ENCODE measurements at regions of chr20 and their contacts with region 1.

Region 1: GRCh38 chr20:40990542-40991120 is 38.0 kb upstream of the TOP1 start:
- DNase-seq: peak; percentile 85
- ATAC-seq: peak; percentile 90
- H3K4me3 Mint-ChIP-seq: peak overlapping the region; percentile 15
- H3K27ac Mint-ChIP-seq: peak overlapping the region; percentile 85
- H3K4me1 Mint-ChIP-seq: peaks cover 55% of the 10 kb centered on the region
- H3K27me3 Mint-ChIP-seq: no peaks in the 10 kb centered on the region

Region 2: GRCh38 chr20:40860487-40860902 is 130.1 kb before region 1 on chr20:
- CTCF ChIA-PET with region 1: no interaction called
- POLR2A ChIA-PET with region 1: no interaction called
- DNase-seq: no peak
- ATAC-seq: no peak
- H3K4me3 Mint-ChIP-seq: no peak overlapping the region
- H3K27ac Mint-ChIP-seq: no peak overlapping the region
- H3K4me1 Mint-ChIP-seq: no peaks in the 10 kb centered on the region
- H3K27me3 Mint-ChIP-seq: peaks cover 2% of the 10 kb centered on the region

Region 3: DNA sequence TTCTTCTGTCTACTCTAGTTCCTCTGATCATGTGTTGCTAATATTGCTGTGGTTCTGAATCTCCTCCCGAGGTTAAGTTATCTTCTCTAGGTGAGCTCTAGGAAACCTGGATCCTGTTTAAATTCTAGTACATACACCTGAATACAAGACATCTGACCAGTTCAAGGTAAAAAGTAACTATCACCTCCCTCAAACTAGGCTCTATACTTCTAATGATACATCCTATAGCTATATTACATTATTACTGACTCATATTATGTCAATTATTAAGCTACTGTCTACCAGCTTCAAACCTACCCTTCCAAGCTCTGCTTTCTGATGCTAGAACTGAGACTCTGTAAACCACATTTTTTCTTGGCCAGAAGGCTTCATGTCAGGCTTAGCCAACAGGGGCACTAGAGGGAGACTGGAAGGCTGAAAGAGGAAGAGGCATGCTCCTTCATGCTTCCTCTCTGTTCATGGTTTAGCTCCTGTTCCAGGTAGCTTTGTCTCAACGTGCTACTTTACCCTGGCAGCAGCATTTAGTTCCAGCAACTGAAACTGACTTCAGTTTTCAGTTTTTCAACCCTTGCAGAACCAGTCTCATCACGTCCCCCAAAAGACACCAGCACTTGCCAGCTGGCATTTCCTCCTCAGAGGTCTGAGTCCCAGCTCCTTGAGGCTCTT is 110.4 kb before region 1 on chr20:
- CTCF ChIA-PET with region 1: no interaction called
- POLR2A ChIA-PET with region 1: no interaction called
- DNase-seq: no peak
- ATAC-seq: no peak
- H3K4me3 Mint-ChIP-seq: no peak overlapping the region
- H3K27ac Mint-ChIP-seq: peak overlapping the region; percentile 45
- H3K4me1 Mint-ChIP-seq: peaks cover 44% of the 10 kb centered on the region
- H3K27me3 Mint-ChIP-seq: peaks cover 3% of the 10 kb centered on the region

Region 4: DNA sequence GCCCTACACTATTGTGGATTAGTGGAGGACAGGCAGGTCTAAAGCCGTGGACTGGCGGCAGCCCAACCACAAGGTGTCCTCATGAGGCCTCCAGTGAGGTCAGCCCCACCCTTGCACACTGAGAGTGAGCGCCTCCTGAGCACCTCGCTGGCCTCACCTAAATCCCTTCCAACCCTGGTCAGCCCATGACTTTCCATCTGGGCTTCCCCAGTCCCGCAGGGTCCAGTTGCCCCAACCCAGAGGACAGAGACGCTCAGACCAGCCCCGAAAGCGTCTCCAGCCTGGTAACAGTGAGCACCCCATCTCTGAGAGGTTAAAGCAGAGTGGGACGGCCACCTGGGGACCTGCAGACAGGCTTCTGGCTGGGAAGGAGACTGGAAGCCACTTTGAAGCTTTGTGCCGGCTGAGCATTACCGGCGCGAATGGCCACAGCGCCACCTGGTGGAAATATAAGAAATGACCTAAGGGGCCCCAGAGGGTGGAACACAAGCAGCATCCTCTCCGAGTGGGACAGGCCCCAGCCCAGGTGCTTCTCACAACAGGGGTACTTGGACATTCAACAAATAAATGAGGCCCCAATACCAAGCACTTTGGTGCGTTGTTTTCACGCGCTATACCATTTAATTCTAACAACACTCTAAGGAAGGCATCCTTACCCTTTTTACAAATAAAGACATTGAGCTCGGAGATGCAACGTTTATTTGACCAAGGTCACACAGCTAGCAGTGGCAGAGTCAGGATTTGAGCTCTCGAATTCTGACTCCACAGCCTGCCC is 27.7 kb before region 1 on chr20:
- CTCF ChIA-PET with region 1: interaction called, 64 read pairs
- POLR2A ChIA-PET with region 1: interaction called, 3 read pairs
- DNase-seq: peak; percentile 86
- ATAC-seq: peak; percentile 91
- H3K4me3 Mint-ChIP-seq: no peak overlapping the region
- H3K27ac Mint-ChIP-seq: no peak overlapping the region
- H3K4me1 Mint-ChIP-seq: peaks cover 21% of the 10 kb centered on the region
- H3K27me3 Mint-ChIP-seq: peaks cover 9% of the 10 kb centered on the region

Region 5: DNA sequence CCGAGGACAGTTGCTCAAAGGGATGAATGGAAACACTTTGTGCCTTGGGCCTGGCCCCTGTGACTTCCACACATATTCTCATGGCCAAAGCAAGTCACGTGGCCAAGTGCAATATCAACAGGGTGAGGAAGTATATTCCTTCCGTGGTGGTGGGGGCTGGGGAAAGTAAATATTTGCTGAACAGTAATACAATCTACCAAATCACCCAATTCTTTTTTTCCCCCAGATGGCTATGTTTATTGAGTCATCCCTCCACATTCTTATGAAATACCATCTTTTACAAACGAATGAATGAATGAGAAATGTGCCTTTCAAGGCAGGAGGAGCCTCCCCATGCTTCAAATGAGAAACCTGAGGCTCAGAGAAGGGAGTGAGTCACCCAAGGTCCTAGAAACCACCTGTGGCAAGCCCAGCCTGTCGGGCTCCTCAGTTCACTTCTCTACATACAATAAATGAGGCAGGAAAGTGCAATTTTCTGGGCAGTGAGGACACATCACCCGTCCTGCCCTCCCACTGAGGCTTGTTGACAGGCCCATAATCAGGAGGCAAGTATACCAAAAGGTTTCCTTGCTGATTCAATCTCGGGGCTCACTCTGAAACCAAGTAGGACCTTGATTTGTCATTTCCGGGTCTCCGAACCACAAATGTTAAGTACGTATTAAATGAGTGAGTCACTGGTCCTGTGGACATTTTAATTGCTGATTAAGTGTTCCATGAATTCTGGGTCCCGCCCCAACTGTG is 12.7 kb after region 1 on chr20:
- CTCF ChIA-PET with region 1: interaction called, 37 read pairs
- POLR2A ChIA-PET with region 1: interaction called, 10 read pairs
- DNase-seq: peak; percentile 74
- ATAC-seq: peak; percentile 91
- H3K4me3 Mint-ChIP-seq: peak overlapping the region; percentile 26
- H3K27ac Mint-ChIP-seq: peak overlapping the region; percentile 96
- H3K4me1 Mint-ChIP-seq: peaks cover 51% of the 10 kb centered on the region
- H3K27me3 Mint-ChIP-seq: peaks cover 5% of the 10 kb centered on the region

Region 6: DNA sequence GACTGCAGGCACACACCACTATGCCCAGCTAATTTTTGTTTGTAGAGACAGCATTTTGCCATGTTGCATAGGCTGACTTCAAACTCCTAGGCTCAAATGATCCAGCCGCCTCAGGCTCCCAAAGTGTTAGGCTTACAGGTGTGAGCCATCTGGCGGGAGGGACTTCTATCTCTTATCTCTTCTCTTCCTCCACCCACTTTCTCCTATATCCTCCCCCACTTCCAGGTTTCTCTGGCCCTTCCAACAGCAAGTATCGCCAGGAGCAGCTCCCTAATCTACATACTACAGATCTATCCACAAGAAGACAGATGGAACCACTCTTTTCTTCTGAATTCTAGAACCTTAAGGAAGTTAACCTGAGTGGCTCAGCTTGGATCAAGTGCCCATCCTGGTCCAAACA is 32.9 kb after region 1 on chr20:
- CTCF ChIA-PET with region 1: interaction called, 22 read pairs
- POLR2A ChIA-PET with region 1: interaction called, 3 read pairs
- DNase-seq: no peak
- ATAC-seq: no peak
- H3K4me3 Mint-ChIP-seq: no peak overlapping the region
- H3K27ac Mint-ChIP-seq: no peak overlapping the region
- H3K4me1 Mint-ChIP-seq: peaks cover 19% of the 10 kb centered on the region
- H3K27me3 Mint-ChIP-seq: peaks cover 9% of the 10 kb centered on the region

Region 7: GRCh38 chr20:41047975-41048305 is 57.3 kb after region 1 on chr20:
- CTCF ChIA-PET with region 1: interaction called, 141 read pairs
- POLR2A ChIA-PET with region 1: no interaction called
- DNase-seq: no peak
- ATAC-seq: peak; percentile 55
- H3K4me3 Mint-ChIP-seq: peak overlapping the region; percentile 77
- H3K27ac Mint-ChIP-seq: peak overlapping the region; percentile 89
- H3K4me1 Mint-ChIP-seq: peaks cover 87% of the 10 kb centered on the region
- H3K27me3 Mint-ChIP-seq: no peaks in the 10 kb centered on the region

Region 8: DNA sequence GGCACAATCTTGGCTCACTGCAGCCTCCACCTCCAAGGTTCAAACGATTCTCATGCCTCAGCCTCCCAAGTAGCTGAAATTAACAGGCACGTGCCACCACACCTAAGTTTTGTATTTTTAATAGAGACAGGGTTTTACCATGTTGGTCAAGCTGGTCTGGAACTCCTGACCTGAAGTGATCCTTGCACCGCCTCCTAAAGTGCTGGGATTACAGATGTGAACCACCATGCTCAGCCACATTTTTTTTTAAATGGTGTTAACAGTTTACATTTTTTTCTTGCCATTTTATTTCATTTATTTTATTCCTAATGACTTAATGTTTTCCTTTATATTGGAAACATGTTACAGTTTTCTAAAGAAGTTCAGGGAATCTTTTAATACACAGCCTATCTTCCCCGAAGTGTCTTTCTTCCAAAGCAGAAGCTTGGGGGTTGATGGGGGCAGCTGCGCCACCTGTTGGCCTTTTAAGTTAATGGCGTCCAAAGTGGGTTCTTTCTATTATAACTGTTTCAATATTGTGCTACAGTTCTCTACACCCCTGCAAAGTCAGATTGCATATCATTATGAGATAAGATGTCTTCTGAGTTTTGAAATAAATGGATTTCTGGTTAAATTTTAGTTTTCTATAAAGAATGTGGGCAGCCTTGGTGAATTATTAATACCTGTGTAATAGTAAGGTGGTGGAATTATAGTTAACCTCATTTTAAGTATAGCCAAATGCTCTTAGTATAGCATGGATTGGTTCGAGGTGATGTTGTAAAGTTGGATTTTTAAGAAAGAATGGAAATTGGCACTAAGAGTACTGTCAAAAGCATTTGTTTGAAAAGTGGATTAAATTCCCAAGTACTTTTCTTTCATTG is 104.7 kb after region 1 on chr20:
- CTCF ChIA-PET with region 1: interaction called, 225 read pairs
- POLR2A ChIA-PET with region 1: interaction called, 7 read pairs
- DNase-seq: peak; percentile 74
- ATAC-seq: peak; percentile 76
- H3K4me3 Mint-ChIP-seq: no peak overlapping the region
- H3K27ac Mint-ChIP-seq: no peak overlapping the region
- H3K4me1 Mint-ChIP-seq: peaks cover 12% of the 10 kb centered on the region
- H3K27me3 Mint-ChIP-seq: no peaks in the 10 kb centered on the region

Region 9: DNA sequence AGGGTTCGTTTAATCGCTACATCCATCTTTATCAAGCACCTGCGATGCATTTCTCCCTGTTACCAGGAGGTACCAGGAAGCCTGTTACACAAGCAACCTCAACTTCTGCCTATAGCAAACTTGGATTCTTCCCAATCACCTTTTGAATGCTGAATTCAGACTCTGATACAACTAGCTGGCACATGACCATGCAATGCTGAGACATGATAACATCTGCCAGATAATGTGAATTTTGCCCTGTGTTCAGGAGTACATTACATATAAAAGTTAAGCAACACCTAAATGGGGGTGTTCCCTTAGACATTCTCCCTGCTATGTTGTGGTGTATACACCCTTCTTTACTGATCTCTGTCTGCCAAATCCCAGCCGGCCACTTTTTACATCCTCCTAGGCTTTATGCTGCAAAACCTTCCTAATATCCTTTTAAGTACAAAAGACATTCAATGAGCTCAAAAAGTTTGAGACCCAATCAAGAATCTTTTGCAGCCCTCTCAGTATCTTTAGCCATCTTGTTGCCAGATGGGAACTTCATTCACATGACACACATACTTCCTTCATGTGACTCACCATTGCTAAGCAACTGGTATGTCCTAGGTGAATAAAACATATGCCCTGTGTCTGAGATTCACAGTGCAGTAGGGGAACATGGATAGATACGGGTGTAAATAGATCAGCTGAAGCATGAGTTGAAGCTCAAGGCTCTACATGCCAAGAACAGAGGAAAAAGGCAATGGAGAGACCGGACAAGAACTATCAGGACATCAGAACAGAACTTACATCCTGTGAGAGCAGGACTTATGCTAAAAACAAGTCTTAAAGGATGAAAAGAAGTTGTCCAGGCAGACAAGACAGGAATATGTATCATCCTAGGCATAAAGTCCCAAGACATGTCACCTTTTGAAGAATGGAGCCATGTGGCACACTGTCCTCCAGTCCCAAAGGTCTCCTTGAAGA is 242.6 kb after region 1 on chr20:
- CTCF ChIA-PET with region 1: interaction called, 10 read pairs
- POLR2A ChIA-PET with region 1: no interaction called
- DNase-seq: no peak
- ATAC-seq: no peak
- H3K4me3 Mint-ChIP-seq: no peak overlapping the region
- H3K27ac Mint-ChIP-seq: no peak overlapping the region
- H3K4me1 Mint-ChIP-seq: peaks cover 38% of the 10 kb centered on the region
- H3K27me3 Mint-ChIP-seq: no peaks in the 10 kb centered on the region

Measured in activated CD8-positive, alpha-beta T cell treated with anti-CD3 and anti-CD28 coated beads, Interleukin-2, amount 10 ng/mL, durations not matched to agents 7 days and 5 days (primary cell).